WTC11 (cell line): ENCODE measurements at regions of chr10 and their contacts with region 1.

Region 1: DNA sequence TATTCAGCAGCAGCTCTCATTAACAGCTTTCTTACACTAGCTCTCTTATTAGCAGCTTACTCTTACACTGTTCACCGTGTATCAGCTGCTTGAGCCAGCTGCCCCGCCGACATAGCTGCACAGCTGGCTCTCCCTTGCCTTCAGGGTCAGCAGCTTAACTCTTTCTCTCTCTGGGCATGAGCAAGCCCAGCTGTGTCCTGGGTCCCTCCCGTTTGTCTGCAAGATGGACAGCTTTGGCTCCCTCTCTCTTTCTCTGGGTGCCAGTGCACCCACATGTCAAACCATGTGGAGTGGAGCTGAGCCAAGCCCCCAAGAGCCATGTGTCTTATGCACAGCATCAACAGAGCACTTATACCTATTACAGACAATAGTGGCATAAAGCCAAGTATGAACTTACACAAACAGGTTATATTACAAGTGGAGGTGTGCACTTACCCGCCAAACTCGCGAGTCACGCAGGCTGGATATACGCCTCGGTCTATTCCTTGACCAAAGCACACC is 35.7 kb upstream of the MTPAP start:
- DNase-seq: peak; percentile 54
- ATAC-seq: peak; percentile 97
- H3K4me3 Mint-ChIP-seq: no peak overlapping the region
- H3K27ac Mint-ChIP-seq: no peak overlapping the region
- H3K4me1 Mint-ChIP-seq: peaks cover 18% of the 10 kb centered on the region
- H3K27me3 Mint-ChIP-seq: no peaks in the 10 kb centered on the region; the same call in 1 of the 2 replicates
- CTCF ChIP-seq: 0 out of 2 replicates have a peak, but pooled peaks have one; percentile 12

Region 2: DNA sequence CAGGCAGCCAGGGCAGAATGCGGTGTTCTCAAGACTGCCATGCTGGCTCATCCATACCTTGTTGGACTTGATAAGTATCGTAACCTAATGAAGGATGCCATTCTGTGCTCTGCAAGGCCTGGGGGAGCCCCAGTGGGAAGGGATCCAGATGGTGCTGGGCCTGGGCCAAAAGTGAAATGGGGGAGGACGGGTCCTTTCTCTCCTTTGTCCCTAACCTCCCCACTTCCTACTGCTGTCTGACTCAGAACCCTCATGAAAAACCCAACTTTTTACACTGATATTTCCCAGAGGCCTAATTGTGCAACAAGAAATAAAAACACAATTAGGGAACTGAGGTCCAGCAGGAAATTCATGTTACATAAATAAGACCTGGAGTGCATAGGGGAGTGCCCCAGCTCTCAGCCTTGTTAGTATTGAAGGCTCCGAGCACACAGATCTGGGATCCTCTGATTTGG is 556.3 kb before region 1 on chr10:
- CTCF ChIA-PET with region 1: no interaction called
- POLR2A ChIA-PET with region 1: no interaction called
- DNase-seq: no peak
- ATAC-seq: no peak
- H3K4me3 Mint-ChIP-seq: no peak overlapping the region
- H3K27ac Mint-ChIP-seq: no peak overlapping the region
- H3K4me1 Mint-ChIP-seq: peaks cover 8% of the 10 kb centered on the region
- H3K27me3 Mint-ChIP-seq: peaks cover 3% of the 10 kb centered on the region
- CTCF ChIP-seq: no peak

Region 3: GRCh38 chr10:30348378-30348776 is 36.4 kb before region 1 on chr10:
- CTCF ChIA-PET with region 1: interaction called, 10 read pairs
- POLR2A ChIA-PET with region 1: no interaction called
- DNase-seq: no peak
- ATAC-seq: no peak
- H3K4me3 Mint-ChIP-seq: peak overlapping the region; percentile 94
- H3K27ac Mint-ChIP-seq: peak overlapping the region; percentile 97
- H3K4me1 Mint-ChIP-seq: peaks cover 26% of the 10 kb centered on the region
- H3K27me3 Mint-ChIP-seq: peaks cover 2% of the 10 kb centered on the region; the same call in 1 of the 2 replicates
- CTCF ChIP-seq: no peak

Region 4: GRCh38 chr10:30359373-30360206 is 25.2 kb before region 1 on chr10:
- CTCF ChIA-PET with region 1: interaction called, 64 read pairs
- POLR2A ChIA-PET with region 1: no interaction called
- DNase-seq: peak; percentile 85
- ATAC-seq: peak; percentile 91
- H3K4me3 Mint-ChIP-seq: no peak overlapping the region
- H3K27ac Mint-ChIP-seq: no peak overlapping the region
- H3K4me1 Mint-ChIP-seq: peaks cover 9% of the 10 kb centered on the region
- H3K27me3 Mint-ChIP-seq: no peaks in the 10 kb centered on the region; the same call in none of the 2 replicates
- CTCF ChIP-seq: peak; percentile 95

Region 5: GRCh38 chr10:30368065-30368718 is 16.6 kb before region 1 on chr10:
- CTCF ChIA-PET with region 1: interaction called, 14 read pairs
- POLR2A ChIA-PET with region 1: no interaction called
- DNase-seq: no peak
- ATAC-seq: peak; percentile 63
- H3K4me3 Mint-ChIP-seq: no peak overlapping the region
- H3K27ac Mint-ChIP-seq: no peak overlapping the region
- H3K4me1 Mint-ChIP-seq: peaks cover 32% of the 10 kb centered on the region
- H3K27me3 Mint-ChIP-seq: peaks cover 36% of the 10 kb centered on the region
- CTCF ChIP-seq: no peak

Region 6: GRCh38 chr10:30374353-30374752 is 10.4 kb before region 1 on chr10:
- CTCF ChIA-PET with region 1: interaction called, 17 read pairs
- POLR2A ChIA-PET with region 1: no interaction called
- DNase-seq: peak; percentile 71
- ATAC-seq: peak; percentile 90
- H3K4me3 Mint-ChIP-seq: no peak overlapping the region
- H3K27ac Mint-ChIP-seq: no peak overlapping the region
- H3K4me1 Mint-ChIP-seq: peaks cover 48% of the 10 kb centered on the region
- H3K27me3 Mint-ChIP-seq: peaks cover 19% of the 10 kb centered on the region
- CTCF ChIP-seq: no peak